AG04449 (cell line): ENCODE measurements at regions of chr10 and their contacts with region 1.

Region 1: DNA sequence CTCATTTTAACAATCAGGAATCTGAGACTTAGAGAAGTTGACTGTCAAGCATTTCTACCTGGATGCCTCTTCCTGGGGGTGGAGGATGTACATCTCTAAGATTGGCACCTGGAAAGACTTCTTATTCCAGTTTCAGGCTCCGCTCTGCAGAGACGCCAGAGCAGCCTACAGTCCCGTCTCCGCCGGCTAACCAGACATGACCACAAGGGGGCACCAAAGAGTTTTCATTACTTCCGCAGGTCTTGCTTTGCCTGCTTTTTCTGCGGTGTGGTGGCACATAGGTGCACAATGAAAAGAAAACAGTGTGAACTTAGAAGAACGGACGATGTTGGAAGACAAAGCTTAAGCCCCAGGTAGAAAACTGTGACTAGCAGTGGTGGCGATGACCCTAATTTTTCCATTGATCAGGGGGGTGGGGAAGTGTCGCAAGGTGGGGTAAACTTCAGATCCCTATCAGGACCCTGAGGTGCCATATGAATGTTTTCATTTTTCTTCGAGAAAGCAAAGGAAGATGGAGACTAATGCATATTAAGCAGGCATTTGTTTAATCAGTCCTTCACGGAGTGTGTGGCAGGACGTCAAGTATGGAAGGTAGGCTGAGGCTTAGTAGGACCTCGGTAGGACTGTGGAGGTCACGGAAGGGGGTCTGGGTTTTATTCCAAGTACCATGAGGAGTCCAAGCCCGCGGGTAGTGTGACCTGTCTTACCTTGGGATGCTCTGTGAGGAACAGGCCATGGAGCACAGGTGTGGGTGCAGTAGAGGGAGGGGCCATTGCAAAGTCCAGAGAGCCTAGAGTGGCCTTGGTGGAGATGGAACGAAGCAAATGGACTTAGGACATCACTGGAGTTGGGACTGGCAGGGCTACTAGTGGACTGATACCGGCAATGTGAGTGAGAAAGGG is 60.1 kb upstream of the SORCS3 start:
- DNase-seq: no peak
- H3K4me3 ChIP-seq: no peak overlapping the region
- CTCF ChIP-seq: peak; percentile 85

Region 2: GRCh38 chr10:104527013-104527412 is 54.0 kb before region 1 on chr10:
- CTCF ChIA-PET with region 1: no interaction called
- POLR2A ChIA-PET with region 1: no interaction called
- DNase-seq: no peak
- H3K4me3 ChIP-seq: no peak overlapping the region
- CTCF ChIP-seq: no peak

Region 3: GRCh38 chr10:104614245-104614831 is 33.3 kb after region 1 on chr10:
- CTCF ChIA-PET with region 1: interaction called, 49 read pairs
- POLR2A ChIA-PET with region 1: no interaction called
- DNase-seq: no peak
- H3K4me3 ChIP-seq: no peak overlapping the region
- CTCF ChIP-seq: peak; percentile 52

Region 4: DNA sequence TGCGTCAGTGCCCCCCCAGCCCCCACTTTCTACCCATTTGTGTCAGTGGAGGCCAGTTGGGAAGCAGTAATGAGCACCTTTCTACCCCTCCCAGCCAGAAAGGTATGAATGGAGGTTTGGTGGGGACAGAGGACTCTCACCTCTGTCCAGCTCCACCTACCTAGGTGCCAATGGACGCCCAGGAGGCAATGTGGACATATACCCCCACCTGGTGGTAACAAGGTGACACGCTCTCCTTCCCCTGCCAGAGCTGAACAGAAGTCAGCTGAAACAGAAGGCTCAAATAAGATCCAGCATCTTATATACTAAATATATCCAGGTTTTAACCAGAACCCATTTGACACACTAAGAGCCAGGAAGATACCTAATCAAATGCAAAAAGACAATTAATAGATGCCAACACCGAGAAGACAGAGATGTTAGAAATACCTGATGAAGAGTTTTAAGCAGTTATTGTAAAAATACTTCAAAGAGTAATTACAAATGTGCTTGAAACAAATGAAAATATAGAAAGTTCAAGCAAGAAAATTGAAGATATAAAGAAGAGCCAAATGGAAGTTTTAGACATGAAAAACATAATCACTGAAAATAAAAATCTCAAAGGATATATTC is 41.7 kb after region 1 on chr10:
- CTCF ChIA-PET with region 1: interaction called, 49 read pairs
- POLR2A ChIA-PET with region 1: no interaction called
- DNase-seq: no peak
- H3K4me3 ChIP-seq: no peak overlapping the region
- CTCF ChIP-seq: peak; percentile 47

Region 5: GRCh38 chr10:105017116-105017515 is 436.1 kb after region 1 on chr10:
- CTCF ChIA-PET with region 1: no interaction called
- POLR2A ChIA-PET with region 1: no interaction called
- DNase-seq: no peak
- H3K4me3 ChIP-seq: no peak overlapping the region
- CTCF ChIP-seq: no peak